ENCODE measurements at regions of chr13 and their contacts with region 1.

Region 1: DNA sequence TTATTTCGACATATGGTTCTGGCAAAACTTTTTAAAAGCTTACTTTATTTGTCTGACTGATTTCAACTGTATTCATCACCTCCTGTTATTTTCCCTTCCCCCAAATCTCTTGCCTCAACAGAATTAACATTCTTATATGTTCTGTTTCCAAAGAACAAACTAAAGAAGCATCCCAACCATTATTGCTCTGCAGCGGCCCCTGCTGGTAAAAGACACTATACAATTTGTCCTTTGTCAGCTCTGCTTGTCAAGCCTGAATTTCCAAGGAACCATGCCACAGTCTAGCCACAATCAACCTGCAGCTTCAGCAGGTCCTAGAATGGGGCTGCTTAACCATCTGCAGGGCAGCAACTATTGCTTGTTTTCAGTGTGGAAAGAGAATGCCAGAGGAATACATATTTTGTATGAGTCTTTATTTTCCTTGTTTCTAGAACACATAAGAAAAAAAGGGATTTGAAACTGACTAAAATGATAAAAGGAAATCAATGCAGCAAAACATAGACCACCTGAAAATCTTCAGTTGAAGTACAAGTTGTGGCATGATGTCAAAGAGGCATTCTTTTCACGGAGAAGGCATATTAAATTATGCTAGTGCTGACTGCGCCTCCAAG is 845.3 kb downstream of the DIAPH3 start:
- DNase-seq: peak; percentile 9
- ATAC-seq: peak; percentile 82
- H3K4me3 ChIP-seq: no peak overlapping the region
- H3K27ac ChIP-seq: no peak overlapping the region
- H3K4me1 ChIP-seq: no peaks in the 10 kb centered on the region
- H3K27me3 ChIP-seq: no peaks in the 10 kb centered on the region
- CTCF ChIP-seq: peak; percentile 73 to 77 (median 76)
- EP300 ChIP-seq: no peak
- POLR2A ChIP-seq: no peak
- RAD21 ChIP-seq: peak; percentile 74

Region 2: GRCh38 chr13:57629821-57630235 is 1688.6 kb before region 1 on chr13:
- CTCF ChIA-PET with region 1: interaction called, 91 read pairs
- POLR2A ChIA-PET with region 1: no interaction called
- RAD21 ChIA-PET with region 1: interaction called, 14 read pairs
- SMC1A ChIA-PET with region 1: interaction called, 71 read pairs
- in situ Hi-C with region 1: loop called (anchors 5 kb)
- intact Hi-C with region 1: loop called (anchors 1 kb)
- DNase-seq: no peak
- ATAC-seq: peak; percentile 60
- H3K4me3 ChIP-seq: no peak overlapping the region
- H3K27ac ChIP-seq: no peak overlapping the region
- H3K4me1 ChIP-seq: no peaks in the 10 kb centered on the region
- H3K27me3 ChIP-seq: peaks cover 0 to 8% of the 10 kb centered on the region in 2 experiments; a peak in 2 of 4 replicates
- CTCF ChIP-seq: no peak
- EP300 ChIP-seq: no peak
- POLR2A ChIP-seq: no peak
- RAD21 ChIP-seq: no peak

Region 3: DNA sequence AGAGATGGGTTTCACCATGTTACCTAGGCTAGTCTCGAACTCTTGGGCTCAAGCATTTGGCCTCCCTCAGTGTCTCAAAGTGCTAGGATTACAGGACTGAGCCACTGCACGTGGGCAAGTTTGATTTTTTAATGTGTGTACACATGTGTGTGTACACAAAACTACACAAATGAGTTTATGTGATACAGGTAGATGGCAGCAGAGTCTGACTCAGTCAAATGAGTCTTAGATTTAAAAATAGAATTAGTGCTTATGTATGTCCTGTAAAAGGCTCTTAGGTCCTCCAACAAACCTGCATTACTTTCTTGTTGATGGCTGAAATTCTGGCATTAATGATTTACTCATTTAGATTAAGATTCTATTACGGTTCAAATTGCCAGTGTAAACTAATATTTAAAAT is 1393.2 kb before region 1 on chr13:
- CTCF ChIA-PET with region 1: no interaction called
- POLR2A ChIA-PET with region 1: no interaction called
- RAD21 ChIA-PET with region 1: no interaction called
- SMC1A ChIA-PET with region 1: no interaction called
- in situ Hi-C with region 1: no loop called
- intact Hi-C with region 1: loop called (anchors 5 kb)
- DNase-seq: no peak
- ATAC-seq: no peak
- H3K4me3 ChIP-seq: no peak overlapping the region
- H3K27ac ChIP-seq: no peak overlapping the region
- H3K4me1 ChIP-seq: no peaks in the 10 kb centered on the region
- H3K27me3 ChIP-seq: no peaks in the 10 kb centered on the region
- CTCF ChIP-seq: peak in 1 of 3 experiments; percentile 28; a peak in 1 of 6 replicates
- EP300 ChIP-seq: no peak
- POLR2A ChIP-seq: no peak
- RAD21 ChIP-seq: no peak

Region 4: GRCh38 chr13:59368693-59369092 is 50.3 kb after region 1 on chr13:
- CTCF ChIA-PET with region 1: no interaction called
- POLR2A ChIA-PET with region 1: no interaction called
- RAD21 ChIA-PET with region 1: no interaction called
- SMC1A ChIA-PET with region 1: no interaction called
- in situ Hi-C with region 1: no loop called
- intact Hi-C with region 1: no loop called
- DNase-seq: no peak
- ATAC-seq: no peak
- H3K4me3 ChIP-seq: no peak overlapping the region
- H3K27ac ChIP-seq: no peak overlapping the region
- H3K4me1 ChIP-seq: no peaks in the 10 kb centered on the region
- H3K27me3 ChIP-seq: no peaks in the 10 kb centered on the region
- CTCF ChIP-seq: no peak
- EP300 ChIP-seq: no peak
- POLR2A ChIP-seq: no peak
- RAD21 ChIP-seq: no peak

Measured in GM12878 (cell line).